Motor neuron (in vitro differentiated cells): ENCODE measurements at regions of chr2 and their contacts with region 1.

Region 1: GRCh38 chr2:201451292-201452057 is at the starts of genes STRADB and TRAK2:
- ATAC-seq: peak; percentile 89 to 94 (median 91)
- H3K4me3 ChIP-seq: peak within 1 kb of the TSS; percentile 64 to 89 (median 78)
- H3K27ac ChIP-seq: peak within 1 kb of the TSS; percentile 84 to 88
- H3K4me1 ChIP-seq: peaks cover 4 to 14% of the 10 kb centered on the region in 2 donors
- total RNA-seq, gene STRADB: 24.1 to 77.9 (median 35.6) TPM
- total RNA-seq, gene TRAK2: 8.3 to 58.5 (median 17.8) TPM

Region 2: GRCh38 chr2:201642579-201643215 is 191.2 kb after region 1 on chr2:
- in situ Hi-C with region 1: loop called in 1 of 9 experiments (anchors 25 kb)
- ATAC-seq: peak; percentile 88 to 94 (median 92)
- H3K4me3 ChIP-seq: peak overlapping the region; percentile 61 to 97 (median 85)
- H3K27ac ChIP-seq: peak overlapping the region; percentile 76 to 84
- H3K4me1 ChIP-seq: peaks cover 6 to 9% of the 10 kb centered on the region in 2 donors